Activated T-helper 1 cell treated with anti-CD3 and anti-CD28 coated beads, Interleukin-12 subunit alpha, Interleukin-12 subunit beta, Interleukin-2, Interleukin-4 antibody, amounts not matched to agents 30 ng/mL and 10 ng/mL and 1 ng/mL, durations not matched to agents 14 hours and 24 hours and 36 hours (primary cell): ENCODE measurements at regions of chr1 and their contacts with region 1.

Region 1: DNA sequence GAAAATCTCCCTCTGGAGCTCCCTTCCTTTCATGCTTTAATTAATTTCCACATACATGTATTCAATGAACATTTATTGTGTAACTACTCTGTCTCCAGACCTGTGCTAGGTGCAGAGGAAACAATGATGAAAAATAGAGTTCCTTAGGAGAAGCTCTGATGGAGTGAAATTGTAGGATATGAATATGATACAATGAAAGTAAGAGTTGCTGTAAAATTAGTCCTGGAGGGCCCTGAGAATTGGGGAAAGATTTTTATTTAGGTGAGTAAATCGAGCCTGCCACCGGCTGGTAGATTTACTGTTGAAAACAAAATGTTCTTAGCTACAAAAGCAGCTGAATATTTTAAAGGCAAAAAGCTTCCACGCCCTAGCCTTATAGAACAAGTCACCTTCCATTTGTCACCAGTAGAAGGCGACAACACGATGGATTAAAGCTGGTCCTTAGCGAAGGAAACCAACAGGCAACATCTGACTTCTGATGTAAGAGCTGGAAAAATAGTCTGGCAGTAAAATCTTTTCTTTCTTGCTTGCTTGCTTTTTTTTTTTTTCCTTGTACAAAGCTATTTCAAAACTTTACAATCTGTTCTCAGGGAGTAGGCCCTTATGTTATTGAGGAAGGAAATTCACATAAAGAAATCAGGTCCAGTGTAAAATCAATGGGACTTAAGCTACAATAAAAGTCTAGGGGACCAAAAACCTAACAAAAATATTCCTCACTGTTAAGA is 82.0 kb upstream of the ROR1 start:
- DNase-seq: peak; percentile 4
- H3K4me3 Mint-ChIP-seq: no peak overlapping the region
- H3K27ac Mint-ChIP-seq: no peak overlapping the region
- H3K4me1 Mint-ChIP-seq: peaks cover 6% of the 10 kb centered on the region
- H3K27me3 Mint-ChIP-seq: no peaks in the 10 kb centered on the region

Region 2: DNA sequence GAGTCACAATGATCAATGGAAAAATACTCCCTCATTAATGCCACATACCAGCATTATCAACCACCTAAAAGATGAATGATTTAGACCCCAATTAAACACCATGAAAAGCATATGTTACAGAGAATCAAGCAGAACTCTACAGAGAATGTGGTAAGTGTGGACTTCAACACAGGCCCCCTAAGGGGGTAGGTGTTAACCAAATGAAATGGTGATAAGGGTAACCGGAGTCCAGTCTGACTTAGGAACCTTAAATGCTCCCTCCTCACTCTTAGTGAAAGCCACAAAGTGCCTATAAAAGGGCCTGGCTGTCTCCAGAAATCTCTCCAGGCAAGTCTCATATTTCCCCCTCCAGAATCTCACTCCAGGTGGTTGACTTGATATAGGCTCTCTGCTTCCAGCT is 518.7 kb before region 1 on chr1:
- intact Hi-C with region 1: no loop called
- DNase-seq: no peak
- H3K4me3 Mint-ChIP-seq: no peak overlapping the region
- H3K27ac Mint-ChIP-seq: no peak overlapping the region
- H3K4me1 Mint-ChIP-seq: no peaks in the 10 kb centered on the region
- H3K27me3 Mint-ChIP-seq: peaks cover 2% of the 10 kb centered on the region

Region 3: GRCh38 chr1:63917571-63918417 is 225.9 kb after region 1 on chr1:
- intact Hi-C with region 1: loop called (anchors 5 kb)
- DNase-seq: no peak
- H3K4me3 Mint-ChIP-seq: no peak overlapping the region
- H3K27ac Mint-ChIP-seq: no peak overlapping the region
- H3K4me1 Mint-ChIP-seq: no peaks in the 10 kb centered on the region
- H3K27me3 Mint-ChIP-seq: peaks cover 3% of the 10 kb centered on the region

Region 4: GRCh38 chr1:64136752-64137411 is 445.0 kb after region 1 on chr1:
- intact Hi-C with region 1: loop called (anchors 1 kb)
- DNase-seq: peak; percentile 40
- H3K4me3 Mint-ChIP-seq: no peak overlapping the region
- H3K27ac Mint-ChIP-seq: no peak overlapping the region
- H3K4me1 Mint-ChIP-seq: no peaks in the 10 kb centered on the region
- H3K27me3 Mint-ChIP-seq: peaks cover 2% of the 10 kb centered on the region